ENCODE measurements at regions of chr1 and their contacts with region 1.

Region 1: DNA sequence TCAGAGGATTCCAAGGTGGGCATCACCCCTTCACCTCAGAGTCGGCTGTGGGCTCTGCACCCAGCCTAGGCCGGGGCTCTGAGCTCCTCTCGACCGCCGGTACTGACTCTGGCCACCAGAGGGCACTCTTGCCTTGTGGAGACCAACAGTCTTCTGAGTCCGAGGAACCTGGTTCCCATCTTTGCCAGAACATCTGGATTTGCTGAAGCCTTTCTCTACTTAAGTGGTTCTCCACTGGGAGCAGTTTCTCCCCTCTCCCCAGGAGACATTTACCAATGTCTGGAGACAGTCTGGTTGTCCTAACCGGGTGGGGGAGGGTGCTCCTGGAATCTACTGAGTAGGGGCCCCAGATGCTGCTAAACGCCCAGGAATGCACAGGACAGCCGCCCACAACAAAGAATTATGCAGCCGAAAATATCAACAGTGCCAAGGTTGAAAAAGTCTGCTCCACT is 9.4 kb downstream of the ETV3L start:
- DNase-seq: peak; percentile 87
- CTCF ChIP-seq: peak; percentile 91

Region 2: DNA sequence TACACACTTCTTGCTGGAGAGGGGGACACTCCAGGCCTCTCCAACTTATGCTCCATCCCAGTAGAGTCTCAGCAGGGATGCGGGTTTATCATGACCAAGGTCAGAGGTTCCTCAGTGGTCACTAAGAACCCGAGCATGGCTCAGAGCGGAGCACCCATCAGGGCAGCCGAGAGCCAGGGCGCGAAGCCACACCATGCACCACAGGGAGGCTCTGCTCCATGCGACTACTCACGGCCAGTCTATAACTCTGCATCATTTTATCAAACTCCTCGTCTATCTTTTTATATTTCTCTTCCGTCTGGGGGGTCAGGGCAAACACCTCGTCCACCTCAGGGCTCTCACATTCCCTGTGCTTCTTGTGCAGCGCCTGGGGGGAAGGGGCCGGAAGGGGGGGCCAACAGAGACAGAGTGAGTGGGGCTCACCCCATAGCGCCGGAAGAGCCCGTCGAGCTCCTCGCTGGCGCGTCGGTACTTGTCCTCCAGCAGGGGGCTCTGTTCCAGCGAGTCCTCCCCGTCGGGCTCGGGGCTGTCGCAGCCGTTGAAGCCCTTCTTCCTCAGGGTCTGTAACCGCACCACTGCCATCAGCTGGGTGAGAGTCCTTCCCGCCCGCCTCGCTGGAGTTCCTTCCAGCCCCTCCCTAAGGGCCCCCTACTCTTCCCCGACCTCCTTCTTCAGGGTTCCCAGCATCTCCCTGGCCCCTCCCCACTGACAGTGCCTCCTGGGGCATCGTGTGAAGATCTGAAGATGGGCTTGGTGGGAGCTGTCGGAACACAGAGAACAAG is 609.6 kb before region 1 on chr1:
- CTCF ChIA-PET with region 1: no interaction called
- POLR2A ChIA-PET with region 1: no interaction called
- DNase-seq: peak; percentile 87
- CTCF ChIP-seq: peak; percentile 86

Region 3: GRCh38 chr1:156987715-156988114 is 102.5 kb before region 1 on chr1:
- CTCF ChIA-PET with region 1: no interaction called
- POLR2A ChIA-PET with region 1: no interaction called
- DNase-seq: no peak
- CTCF ChIP-seq: no peak

Region 4: DNA sequence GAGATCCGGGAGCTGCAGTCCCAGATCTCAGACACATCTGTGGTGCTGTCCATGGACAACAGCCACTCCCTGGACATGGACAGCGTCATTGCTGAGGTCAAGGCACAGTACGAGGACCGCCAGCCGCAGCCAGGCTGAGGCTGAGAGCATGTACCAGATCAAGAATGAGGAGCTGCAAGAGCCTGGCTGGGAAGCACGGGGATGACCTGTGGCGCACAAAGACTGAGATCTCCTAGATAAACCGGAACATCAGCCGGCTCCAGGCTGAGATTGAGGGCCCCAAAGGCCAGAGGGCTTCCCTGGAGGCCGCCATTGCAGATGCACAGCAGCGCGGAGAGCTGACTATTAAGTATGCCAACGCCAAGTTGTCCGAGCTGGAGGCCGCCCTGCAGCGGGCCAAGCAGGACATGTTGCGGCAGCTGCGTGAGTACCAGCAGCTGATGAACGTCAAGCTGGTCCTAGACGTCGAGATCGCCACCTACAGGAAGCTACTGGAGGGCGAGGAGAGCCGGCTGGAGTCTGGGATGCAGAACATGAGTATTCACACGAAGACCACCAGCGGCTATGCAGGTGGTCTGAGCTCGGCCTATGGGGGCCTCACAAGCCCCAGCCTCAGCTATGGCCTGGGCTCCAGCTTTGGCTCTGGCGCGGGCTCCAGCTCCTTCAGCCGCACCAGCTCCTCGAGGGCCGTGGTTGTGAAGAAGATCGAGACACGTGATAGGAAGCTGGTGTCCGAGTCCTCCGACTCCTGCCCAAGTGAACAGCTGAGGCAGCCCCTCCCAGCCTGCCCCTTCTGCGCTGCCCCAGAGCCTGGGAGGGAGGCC is 16.1 kb before region 1 on chr1:
- CTCF ChIA-PET with region 1: interaction called, 45 read pairs
- POLR2A ChIA-PET with region 1: no interaction called
- DNase-seq: peak; percentile 66
- CTCF ChIP-seq: peak; percentile 54

Region 5: GRCh38 chr1:157117527-157118057 is 27.4 kb after region 1 on chr1:
- CTCF ChIA-PET with region 1: interaction called, 28 read pairs
- POLR2A ChIA-PET with region 1: no interaction called
- DNase-seq: peak; percentile 70
- CTCF ChIP-seq: no peak

Region 6: GRCh38 chr1:157132641-157133053 is 42.4 kb after region 1 on chr1:
- CTCF ChIA-PET with region 1: interaction called, 43 read pairs
- POLR2A ChIA-PET with region 1: no interaction called
- DNase-seq: no peak
- CTCF ChIP-seq: no peak

Region 7: GRCh38 chr1:157156058-157156541 is 65.9 kb after region 1 on chr1:
- CTCF ChIA-PET with region 1: interaction called, 567 read pairs
- POLR2A ChIA-PET with region 1: interaction called, 4 read pairs
- DNase-seq: peak; percentile 75
- CTCF ChIP-seq: peak; percentile 88

Region 8: DNA sequence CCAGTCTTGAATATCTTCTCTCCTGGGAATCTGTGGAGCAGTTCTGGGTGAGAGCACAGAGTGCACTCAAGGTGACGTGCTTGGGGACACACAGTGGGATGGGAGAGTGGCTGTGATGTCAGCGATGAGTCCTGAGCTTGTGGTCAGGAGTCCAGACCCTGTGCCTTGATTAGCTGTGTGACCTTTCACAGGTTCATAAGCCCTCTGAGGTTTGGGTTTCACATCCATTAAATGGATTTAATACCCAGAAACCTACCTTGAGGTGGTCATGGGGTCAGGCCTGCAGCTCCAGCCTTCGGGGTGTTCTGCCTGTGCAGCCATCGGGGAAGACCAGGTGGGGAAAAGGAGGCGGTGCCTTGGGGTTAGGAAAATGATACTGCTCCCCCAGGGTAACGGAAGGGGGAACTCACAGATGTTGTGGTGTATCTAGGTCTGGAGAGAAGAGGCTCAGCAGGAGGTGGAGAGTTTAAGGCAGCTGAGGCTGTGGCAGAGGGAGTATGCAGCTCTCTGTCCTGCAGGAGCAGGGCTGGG is 86.4 kb after region 1 on chr1:
- CTCF ChIA-PET with region 1: interaction called, 19 read pairs
- POLR2A ChIA-PET with region 1: no interaction called
- DNase-seq: peak; percentile 41
- CTCF ChIP-seq: no peak

Region 9: GRCh38 chr1:157249326-157249725 is 159.1 kb after region 1 on chr1:
- CTCF ChIA-PET with region 1: no interaction called
- POLR2A ChIA-PET with region 1: no interaction called
- DNase-seq: peak; percentile 26
- CTCF ChIP-seq: no peak